OCI-LY7 (cell line): ENCODE measurements at regions of chr15 and their contacts with region 1.

Region 1: DNA sequence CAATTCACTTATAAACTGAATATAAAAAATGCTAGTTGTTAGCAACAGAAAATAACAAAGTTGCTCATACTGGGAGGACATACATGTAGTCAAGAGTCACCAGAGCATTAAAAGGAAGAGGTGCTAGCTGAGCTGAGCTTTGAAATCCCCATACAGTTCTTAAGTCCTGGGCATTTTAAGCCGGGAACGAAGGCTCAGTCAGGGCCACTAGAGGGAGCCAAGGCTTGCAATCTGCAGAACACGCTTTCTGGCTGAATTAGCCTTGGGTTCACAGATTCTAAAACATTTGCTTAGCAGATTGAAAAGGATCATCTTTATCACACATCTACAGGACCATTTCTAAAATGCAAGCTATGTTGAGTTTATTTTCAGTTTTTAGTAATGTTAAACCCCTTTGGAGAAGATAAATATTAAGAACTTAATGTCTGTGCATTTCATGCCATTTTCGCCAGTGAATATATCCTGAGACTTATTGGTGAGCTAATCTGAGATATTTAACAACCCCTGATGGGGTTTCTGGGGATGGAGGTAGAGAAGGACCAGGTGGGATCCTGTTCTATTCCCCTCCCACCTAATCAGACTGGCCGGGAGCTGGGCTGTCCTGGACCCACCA is 26.3 kb upstream of the MNS1 start:
- DNase-seq: peak; percentile 89
- H3K4me3 ChIP-seq: no peak overlapping the region
- H3K27ac ChIP-seq: no peak overlapping the region
- H3K4me1 ChIP-seq: peaks cover under 1% of the 10 kb centered on the region
- CTCF ChIP-seq: peak; percentile 98

Region 2: GRCh38 chr15:57146506-57147201 is 655.4 kb after region 1 on chr15:
- CTCF ChIA-PET with region 1: no interaction called
- POLR2A ChIA-PET with region 1: no interaction called
- intact Hi-C with region 1: loop called (anchors 10 kb)
- DNase-seq: peak; percentile 53
- H3K4me3 ChIP-seq: no peak overlapping the region
- H3K27ac ChIP-seq: no peak overlapping the region
- H3K4me1 ChIP-seq: peaks cover 3% of the 10 kb centered on the region
- CTCF ChIP-seq: peak; percentile 91

Region 3: GRCh38 chr15:57213862-57214261 is 722.6 kb after region 1 on chr15:
- CTCF ChIA-PET with region 1: interaction called, 5 read pairs
- POLR2A ChIA-PET with region 1: no interaction called
- intact Hi-C with region 1: loop called (anchors 1 kb)
- DNase-seq: peak; percentile 48
- H3K4me3 ChIP-seq: no peak overlapping the region
- H3K27ac ChIP-seq: no peak overlapping the region
- H3K4me1 ChIP-seq: peaks cover 7% of the 10 kb centered on the region
- CTCF ChIP-seq: peak; percentile 77

Region 4: GRCh38 chr15:57306161-57306943 is 815.1 kb after region 1 on chr15:
- CTCF ChIA-PET with region 1: interaction called, 4 read pairs
- POLR2A ChIA-PET with region 1: no interaction called
- intact Hi-C with region 1: loop called (anchors 1 kb)
- DNase-seq: peak; percentile 81
- H3K4me3 ChIP-seq: peak overlapping the region; percentile 63
- H3K27ac ChIP-seq: no peak overlapping the region
- H3K4me1 ChIP-seq: peaks cover 9% of the 10 kb centered on the region
- CTCF ChIP-seq: peak; percentile 94

Region 5: GRCh38 chr15:57527382-57528091 is 1036.3 kb after region 1 on chr15:
- CTCF ChIA-PET with region 1: no interaction called
- POLR2A ChIA-PET with region 1: no interaction called
- intact Hi-C with region 1: loop called (anchors 10 kb)
- DNase-seq: peak; percentile 86
- H3K4me3 ChIP-seq: no peak overlapping the region
- H3K27ac ChIP-seq: no peak overlapping the region
- H3K4me1 ChIP-seq: no peaks in the 10 kb centered on the region
- CTCF ChIP-seq: peak; percentile 79